Mucosa of descending colon (tissue), 3 donors: ENCODE measurements at regions of chr20 and their contacts with region 1.

Region 1: DNA sequence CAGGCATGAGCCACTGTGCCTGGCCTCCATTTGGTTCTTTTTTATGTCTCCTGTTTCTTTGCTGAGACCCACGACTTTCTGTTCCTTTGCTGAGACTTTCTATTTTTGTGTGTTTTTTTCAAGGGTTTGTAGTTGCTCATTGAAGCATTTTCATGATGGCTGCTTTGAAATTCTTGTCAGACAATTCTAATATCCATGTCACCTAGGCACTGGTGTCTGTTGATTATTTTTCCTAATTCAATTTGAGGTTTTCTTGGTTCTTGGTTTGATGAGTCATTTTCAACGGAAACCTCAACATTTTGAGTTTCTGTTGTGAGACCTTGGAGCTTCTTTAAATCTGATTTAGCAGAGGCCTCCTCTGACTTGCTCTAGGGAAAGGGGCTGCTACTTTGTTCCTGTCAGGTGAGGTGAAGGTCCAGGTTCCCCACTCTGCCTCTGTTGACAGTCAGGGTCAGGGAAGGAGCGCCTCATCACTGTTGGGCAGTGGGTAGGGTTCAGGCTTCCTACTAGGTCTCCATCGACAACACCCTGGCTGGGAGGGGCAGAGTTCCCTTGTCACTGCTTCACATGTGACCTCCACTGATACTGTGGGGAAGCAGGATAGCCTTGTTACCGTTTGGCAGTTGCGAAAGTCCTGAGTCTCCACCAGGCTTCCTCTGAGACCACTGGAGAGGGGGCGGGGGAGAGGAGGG is 67.2 kb upstream of the RNF24 start:
- DNase-seq: peak; percentile 39 to 53 (median 41)
- ATAC-seq: peak; percentile 48
- H3K4me3 ChIP-seq: no peak overlapping the region
- H3K4me1 ChIP-seq: no peaks in the 10 kb centered on the region
- CTCF ChIP-seq: no peak

Region 2: DNA sequence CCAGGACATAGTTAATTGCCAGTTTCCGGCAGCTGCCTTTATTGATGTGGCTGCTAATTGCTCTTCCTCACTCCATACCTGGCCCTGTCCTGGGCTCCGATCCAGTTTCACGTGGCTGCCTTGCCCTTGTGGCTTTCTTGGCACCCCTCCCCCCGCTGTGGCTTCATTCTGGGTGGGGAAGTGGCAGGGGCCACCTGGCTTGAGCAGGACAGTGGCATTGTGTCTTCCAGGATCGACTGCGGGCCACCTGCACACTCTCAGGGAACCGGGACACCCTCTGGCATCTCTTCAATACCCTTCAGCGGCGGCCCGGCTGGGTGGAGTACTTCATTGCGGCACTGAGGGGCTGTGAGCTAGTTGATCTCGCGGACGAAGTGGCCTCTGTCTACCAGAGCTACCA is 225.1 kb before region 1 on chr20:
- intact Hi-C with region 1: no loop called
- DNase-seq: no peak
- ATAC-seq: peak; percentile 18
- H3K4me3 ChIP-seq: no peak overlapping the region
- H3K4me1 ChIP-seq: no peaks in the 10 kb centered on the region
- CTCF ChIP-seq: no peak

Region 3: DNA sequence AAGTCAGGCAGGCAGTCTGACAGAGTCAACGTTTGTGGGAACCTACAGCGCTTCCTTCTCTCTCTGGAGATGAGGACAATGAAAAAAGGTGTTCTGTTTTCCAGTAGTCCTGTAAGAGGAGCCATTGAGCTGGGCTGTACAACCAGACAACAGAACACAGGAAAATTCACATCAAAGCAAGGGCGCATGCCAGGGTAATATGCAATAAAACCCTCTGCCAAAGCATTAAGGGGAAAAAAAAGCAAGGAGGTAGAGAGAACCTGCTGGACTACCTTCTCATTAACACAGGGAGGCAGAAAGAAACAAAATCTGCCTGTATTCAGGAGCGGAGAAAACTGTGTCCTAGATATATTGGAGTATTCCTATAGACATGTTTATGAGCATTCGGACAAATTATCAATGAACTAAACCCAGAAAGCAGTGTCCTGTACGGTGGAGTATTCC is 68.5 kb before region 1 on chr20:
- intact Hi-C with region 1: loop called (anchors 5 to 10 kb)
- DNase-seq: peak in 1 of 3 donors; percentile 81
- ATAC-seq: peak; percentile 72
- H3K4me3 ChIP-seq: no peak overlapping the region
- H3K4me1 ChIP-seq: peaks cover 8% of the 10 kb centered on the region
- CTCF ChIP-seq: peak; percentile 32